Mammary epithelial cell (primary cell): ENCODE measurements at regions of chr11 and their contacts with region 1.

Region 1: DNA sequence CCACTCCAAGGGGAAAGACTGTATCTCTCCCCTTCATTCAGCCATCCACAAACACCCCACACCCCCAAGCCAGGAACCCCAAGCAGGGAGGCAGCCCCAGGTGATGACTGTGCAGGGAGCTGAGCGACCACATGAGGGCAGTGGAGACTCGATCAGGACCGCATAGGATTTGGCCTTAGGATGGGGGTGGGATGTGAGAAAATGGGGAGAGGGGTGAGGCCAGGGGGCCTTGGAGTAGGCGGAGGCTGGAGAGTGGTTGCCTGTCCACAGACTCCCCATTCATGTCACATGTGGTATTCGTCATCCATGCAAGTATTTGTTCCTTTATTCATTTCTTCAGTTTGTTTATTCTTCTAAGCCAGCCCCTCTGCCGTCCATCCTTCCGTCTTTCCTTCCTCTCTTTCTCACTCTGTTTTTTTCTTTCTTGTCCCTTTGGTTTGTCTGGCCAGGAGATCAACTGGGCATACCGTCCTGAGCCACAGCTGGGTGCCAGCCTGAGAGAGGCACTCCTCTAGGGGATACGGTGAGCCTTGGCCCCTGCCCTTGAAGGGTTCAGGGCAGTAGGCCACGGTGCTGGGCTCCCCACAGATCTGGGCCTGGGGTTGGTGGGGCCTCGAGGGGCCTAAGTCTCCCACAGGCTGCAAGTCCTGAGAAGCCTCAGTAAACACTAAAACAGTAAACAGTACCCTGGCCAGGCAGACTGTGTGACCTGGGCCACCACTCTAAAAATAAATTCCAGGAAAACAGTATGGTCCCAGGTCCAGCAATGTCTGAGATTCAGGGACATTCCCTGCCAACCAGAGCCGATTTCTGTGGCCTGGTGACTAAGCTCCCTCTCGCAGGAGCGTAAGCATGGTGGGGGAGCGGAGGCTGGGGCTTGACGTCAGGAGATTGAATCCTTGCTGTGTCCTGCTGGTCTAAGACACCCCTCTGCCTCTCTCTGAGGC is 2.5 kb upstream of the RHOD start:
- DNase-seq: peak; percentile 57
- H3K4me3 ChIP-seq: no peak overlapping the region
- H3K27ac ChIP-seq: peak overlapping the region; percentile 99
- H3K4me1 ChIP-seq: peaks cover 42% of the 10 kb centered on the region
- H3K27me3 ChIP-seq: no peaks in the 10 kb centered on the region
- CTCF ChIP-seq: peak; percentile 89 to 95

Region 2: DNA sequence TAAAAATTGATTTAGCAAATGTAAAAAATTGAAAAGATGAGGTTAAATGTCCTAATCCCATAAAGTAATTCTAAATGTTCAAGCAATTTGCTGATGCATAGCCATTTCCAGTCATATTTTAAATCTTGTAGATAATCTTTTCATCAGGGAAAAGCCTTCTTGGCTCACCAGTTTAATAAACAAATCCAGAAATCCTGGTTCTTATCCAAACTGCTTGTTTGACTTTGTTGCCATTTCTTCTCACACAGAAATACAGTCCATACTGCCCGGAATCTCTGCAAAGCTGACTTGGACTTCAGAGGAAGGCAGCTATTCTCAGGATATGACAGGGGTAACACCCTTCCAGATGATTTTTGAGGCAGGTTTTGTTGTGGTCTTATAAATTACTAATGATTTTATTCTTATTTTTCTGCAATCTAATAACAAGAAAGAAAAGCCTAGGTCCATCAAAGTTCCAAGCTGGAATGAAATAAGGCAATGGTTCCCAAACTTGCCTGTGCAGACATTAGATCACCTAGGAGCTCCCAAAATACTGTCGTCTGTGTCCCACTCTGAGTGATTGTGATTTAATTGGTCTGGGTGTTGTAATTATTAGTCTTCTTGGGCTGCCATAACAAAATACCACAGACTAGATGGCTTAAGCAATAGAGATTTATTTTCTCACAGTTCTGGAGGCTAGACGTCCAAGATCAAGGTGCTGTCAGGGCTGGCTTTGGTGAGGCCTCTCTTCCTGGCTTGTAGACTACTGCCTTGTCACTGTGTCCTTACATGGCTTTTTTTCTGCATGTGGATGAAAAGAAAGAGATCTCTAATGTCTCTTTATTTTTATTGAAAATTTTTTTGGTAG is 266.0 kb before region 1 on chr11:
- CTCF ChIA-PET with region 1: no interaction called
- dilution Hi-C with region 1: no loop called
- in situ Hi-C with region 1: no loop called
- intact Hi-C with region 1: no loop called
- DNase-seq: no peak
- H3K4me3 ChIP-seq: no peak overlapping the region
- H3K27ac ChIP-seq: no peak overlapping the region
- H3K4me1 ChIP-seq: no peaks in the 10 kb centered on the region
- H3K27me3 ChIP-seq: no peaks in the 10 kb centered on the region
- CTCF ChIP-seq: no peak

Region 3: DNA sequence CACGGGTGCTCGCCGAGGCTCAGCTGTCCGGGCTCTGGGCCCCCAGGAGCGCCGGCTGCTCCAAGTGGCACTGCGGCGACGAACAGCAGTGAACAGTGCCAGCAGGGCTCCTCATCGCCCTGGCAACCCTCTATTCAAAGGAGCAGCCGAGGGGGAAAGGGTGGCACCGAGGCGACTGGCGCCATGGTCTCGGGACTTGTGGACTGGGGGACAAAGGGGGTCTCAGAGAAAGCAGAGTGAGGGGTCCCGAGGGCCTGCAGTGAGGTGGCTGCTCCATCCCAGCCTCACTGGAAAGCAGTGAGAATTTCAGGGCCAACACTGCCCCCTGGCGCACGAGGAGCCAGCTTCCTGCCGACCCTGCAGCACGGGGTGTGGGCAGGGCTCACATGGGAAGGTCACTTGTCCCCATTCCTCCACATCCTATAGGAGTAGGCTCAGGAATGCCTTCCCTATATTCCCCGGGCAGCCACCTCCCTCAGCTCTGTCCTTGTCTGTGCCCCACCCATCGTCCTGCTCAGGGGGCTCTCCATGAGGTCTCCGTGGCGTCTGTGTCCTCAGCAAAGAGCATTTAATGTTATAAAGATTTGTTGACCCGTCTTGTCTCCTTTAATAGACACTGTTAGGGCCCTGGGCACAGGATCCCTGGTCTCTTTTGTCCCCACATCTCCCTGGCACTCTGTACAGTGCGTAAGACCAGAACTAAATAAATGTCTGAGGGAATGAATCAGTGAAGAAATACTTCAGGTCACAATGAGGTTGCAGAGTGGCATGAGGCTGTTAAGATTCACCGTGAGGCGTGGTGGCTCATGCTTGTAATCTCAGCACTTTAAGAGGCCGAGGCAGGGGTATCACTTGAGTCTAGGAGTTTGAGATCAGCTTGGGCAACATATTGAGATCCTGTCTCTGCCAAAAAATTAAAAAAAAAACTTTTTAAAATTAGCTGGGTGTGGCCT is 170.9 kb before region 1 on chr11:
- CTCF ChIA-PET with region 1: no interaction called
- dilution Hi-C with region 1: no loop called
- in situ Hi-C with region 1: loop called in 1 of 2 experiments (anchors 10 kb)
- intact Hi-C with region 1: no loop called
- DNase-seq: peak; percentile 60
- H3K4me3 ChIP-seq: no peak overlapping the region
- H3K27ac ChIP-seq: no peak overlapping the region
- H3K4me1 ChIP-seq: peaks cover 38% of the 10 kb centered on the region
- H3K27me3 ChIP-seq: no peaks in the 10 kb centered on the region
- CTCF ChIP-seq: peak; percentile 62 to 76

Region 4: DNA sequence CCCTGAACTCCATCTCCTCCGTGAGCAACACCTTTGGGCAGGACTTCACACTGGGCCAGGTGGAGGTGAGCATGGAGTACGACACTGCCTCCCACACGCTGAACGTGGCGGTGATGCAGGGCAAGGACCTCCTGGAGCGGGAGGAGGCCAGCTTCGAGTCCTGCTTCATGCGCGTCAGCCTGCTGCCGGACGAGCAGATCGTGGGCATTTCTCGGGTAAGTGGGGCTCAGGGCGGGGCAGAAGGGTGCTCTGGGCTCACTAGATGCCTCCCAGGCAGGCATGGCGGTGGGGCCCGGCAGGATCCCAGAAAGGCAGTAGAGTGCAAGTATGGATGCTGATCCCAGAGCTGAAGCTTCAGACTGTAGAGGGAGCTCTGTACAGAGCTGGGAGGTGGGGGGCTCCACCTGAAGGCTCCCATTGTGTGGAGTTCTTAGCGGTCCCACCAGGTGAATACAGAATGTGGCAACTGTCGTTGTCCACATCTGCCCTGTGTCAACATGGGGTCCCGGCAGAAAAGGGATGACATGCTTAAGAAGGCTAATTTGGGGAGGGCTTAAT is 14.1 kb before region 1 on chr11:
- CTCF ChIA-PET with region 1: no interaction called
- dilution Hi-C with region 1: no loop called
- in situ Hi-C with region 1: no loop called
- intact Hi-C with region 1: no loop called
- DNase-seq: no peak
- H3K4me3 ChIP-seq: no peak overlapping the region
- H3K27ac ChIP-seq: no peak overlapping the region
- H3K4me1 ChIP-seq: peaks cover 6% of the 10 kb centered on the region
- H3K27me3 ChIP-seq: no peaks in the 10 kb centered on the region
- CTCF ChIP-seq: no peak

Region 5: DNA sequence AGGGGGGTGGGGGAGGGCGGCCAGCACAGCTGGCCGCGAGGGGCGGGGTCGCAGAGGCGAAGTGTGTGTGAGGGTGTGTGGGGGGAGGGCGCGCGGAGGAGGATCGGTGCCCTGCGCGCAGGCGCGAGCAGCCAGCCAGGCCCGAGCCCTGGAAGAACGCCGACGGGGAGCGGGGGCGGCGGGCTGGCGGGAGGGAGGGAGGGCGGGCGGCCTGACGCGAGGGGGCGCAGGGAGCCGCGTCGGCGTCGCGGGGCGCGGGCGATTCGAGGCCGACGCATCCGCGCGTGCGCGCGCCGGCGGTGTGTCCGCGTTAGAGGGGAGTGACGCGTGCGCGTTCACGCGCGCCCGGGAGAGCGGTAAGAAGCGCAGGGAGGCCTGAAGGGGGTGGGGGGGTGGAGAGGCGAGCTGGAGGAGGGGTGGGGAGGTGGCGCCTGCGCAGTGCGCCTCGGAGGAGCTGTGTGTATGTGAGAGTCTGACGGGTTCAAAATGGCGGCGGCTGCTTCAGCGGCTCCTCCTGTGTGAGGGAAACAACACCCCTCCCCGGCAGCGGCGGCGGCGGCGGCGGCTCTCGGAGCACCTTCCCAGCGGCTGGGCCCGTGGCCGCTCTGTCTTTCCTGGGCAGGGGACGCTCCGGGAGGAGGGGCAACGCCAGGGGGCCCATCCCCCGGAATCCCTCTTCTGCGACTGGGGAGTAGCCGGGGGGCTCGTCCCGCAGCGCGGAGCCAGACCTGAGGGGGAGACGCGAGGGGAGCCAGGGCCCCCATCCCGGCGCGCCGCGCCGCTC is 64.8 kb after region 1 on chr11 and contains the start of gene KDM2A:
- CTCF ChIA-PET with region 1: no interaction called
- dilution Hi-C with region 1: no loop called
- in situ Hi-C with region 1: no loop called
- intact Hi-C with region 1: loop called (anchors 2 kb)
- DNase-seq: peak; percentile 97
- H3K4me3 ChIP-seq: peak within 1 kb of the TSS; percentile 82 to 90 (median 85)
- H3K27ac ChIP-seq: peak within 1 kb of the TSS; percentile 84
- H3K4me1 ChIP-seq: peaks cover 14% of the 10 kb centered on the region
- H3K27me3 ChIP-seq: no peaks in the 10 kb centered on the region
- CTCF ChIP-seq: no peak
- total RNA-seq, gene KDM2A: 41.8 to 59.7 TPM

Region 6: DNA sequence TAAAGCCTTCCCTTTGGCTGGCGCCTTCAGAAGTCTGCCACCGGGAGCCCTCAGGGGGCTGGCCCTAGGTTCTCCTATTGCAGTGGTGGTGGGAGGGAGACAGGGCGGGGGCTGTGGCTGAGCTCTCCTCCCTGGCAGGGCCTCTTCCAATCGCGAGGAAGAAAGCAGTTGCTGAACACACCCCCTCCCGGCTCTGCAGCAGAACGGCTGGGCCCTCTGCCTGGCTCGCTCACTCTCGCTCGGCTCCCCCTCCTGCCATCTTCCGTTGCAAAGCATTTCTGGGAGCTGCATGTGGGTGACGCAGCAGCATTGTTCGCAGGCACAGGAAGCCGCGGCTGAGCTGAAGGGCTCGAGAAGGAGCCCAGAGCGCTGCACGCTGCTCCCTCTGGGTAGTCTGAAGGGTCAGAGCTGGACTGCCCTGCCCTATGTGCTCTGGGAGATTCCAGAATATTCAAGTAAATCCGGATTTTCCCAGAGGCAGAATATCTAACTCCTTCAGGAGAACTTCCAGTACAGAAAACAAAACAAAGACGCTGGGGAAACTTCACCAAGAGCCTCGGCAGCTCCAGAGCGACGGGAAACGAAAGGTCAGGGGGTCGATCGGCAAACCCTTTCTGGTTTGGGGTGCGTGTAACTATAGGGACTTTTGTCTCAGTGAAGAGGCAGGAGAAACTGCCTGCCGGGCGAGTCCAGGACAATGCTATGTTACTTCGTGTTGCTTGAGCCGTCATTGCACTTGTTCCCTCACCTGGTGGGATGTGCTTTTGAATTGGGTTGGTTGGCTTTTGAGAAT is 185.8 kb after region 1 on chr11:
- CTCF ChIA-PET with region 1: no interaction called
- dilution Hi-C with region 1: no loop called
- in situ Hi-C with region 1: loop called in 1 of 2 experiments (anchors 10 kb)
- intact Hi-C with region 1: loop called (anchors 1 kb)
- DNase-seq: peak; percentile 99
- H3K4me3 ChIP-seq: peak overlapping the region; percentile 58 to 85 (median 65)
- H3K27ac ChIP-seq: peak overlapping the region; percentile 96
- H3K4me1 ChIP-seq: peaks cover 24% of the 10 kb centered on the region
- H3K27me3 ChIP-seq: no peaks in the 10 kb centered on the region
- CTCF ChIP-seq: no peak

Region 7: DNA sequence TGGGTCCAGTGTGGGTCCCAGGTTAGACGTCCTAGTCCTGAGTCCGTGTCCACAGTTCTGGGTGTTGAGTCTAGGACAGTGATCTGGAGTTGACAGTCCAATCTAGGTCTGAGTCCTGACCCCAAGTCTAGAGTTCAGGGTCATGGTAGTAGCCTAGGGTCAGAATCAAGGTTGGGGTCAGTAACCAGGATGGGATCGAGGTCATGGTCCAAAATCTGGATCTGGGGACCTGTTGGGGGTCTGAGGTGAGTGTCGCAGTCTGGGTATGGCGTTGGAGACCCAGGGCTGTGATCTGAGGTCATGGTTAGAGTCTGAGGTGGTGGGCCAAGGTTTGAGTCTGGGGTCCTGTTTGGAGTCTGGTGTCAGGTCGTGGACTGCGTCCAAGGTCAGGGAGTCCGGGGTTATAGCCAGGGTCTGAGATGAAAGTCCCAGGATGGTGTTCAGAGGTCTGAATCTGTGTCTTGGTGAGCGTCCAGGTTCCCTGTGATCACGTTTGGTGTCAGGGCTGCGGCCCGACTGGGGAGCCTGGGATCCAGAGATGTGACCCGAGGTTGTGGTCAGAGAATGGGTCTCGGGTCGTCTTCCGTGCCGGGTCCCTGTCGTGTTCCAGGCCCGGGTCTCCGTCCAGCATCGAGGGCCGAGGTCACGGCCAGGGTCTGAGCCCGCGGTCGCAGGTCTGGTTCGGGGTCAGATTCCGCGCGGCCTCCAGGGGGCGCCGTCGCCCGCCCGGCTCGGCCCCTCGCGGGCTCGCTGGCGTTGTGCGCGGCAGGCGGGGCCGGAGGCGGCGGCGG is 211.7 kb after region 1 on chr11:
- CTCF ChIA-PET with region 1: interaction called, 13 read pairs
- dilution Hi-C with region 1: no loop called
- in situ Hi-C with region 1: no loop called
- intact Hi-C with region 1: no loop called
- DNase-seq: peak; percentile 46
- H3K4me3 ChIP-seq: peak overlapping the region in 2 of 3 experiments; percentile 20 to 33
- H3K27ac ChIP-seq: no peak overlapping the region
- H3K4me1 ChIP-seq: peaks cover 62% of the 10 kb centered on the region
- H3K27me3 ChIP-seq: no peaks in the 10 kb centered on the region
- CTCF ChIP-seq: peak; percentile 36 to 65